ENCODE measurements at regions of chr1 and their contacts with region 1.

Region 1: GRCh38 chr1:27589841-27590426 is 14.0 kb downstream of the AHDC1 start:
- DNase-seq: no peak
- H3K4me3 ChIP-seq: no peak overlapping the region
- H3K27ac ChIP-seq: no peak overlapping the region
- H3K4me1 ChIP-seq: peaks cover 41% of the 10 kb centered on the region
- H3K27me3 ChIP-seq: no peaks in the 10 kb centered on the region
- CTCF ChIP-seq: no peak

Region 2: GRCh38 chr1:27473755-27474154 is 116.2 kb before region 1 on chr1:
- CTCF ChIA-PET with region 1: no interaction called
- dilution Hi-C with region 1: no loop called
- in situ Hi-C with region 1: no loop called
- intact Hi-C with region 1: no loop called
- DNase-seq: no peak
- H3K4me3 ChIP-seq: no peak overlapping the region
- H3K27ac ChIP-seq: no peak overlapping the region
- H3K4me1 ChIP-seq: peaks cover 7% of the 10 kb centered on the region
- H3K27me3 ChIP-seq: no peaks in the 10 kb centered on the region
- CTCF ChIP-seq: no peak

Region 3: DNA sequence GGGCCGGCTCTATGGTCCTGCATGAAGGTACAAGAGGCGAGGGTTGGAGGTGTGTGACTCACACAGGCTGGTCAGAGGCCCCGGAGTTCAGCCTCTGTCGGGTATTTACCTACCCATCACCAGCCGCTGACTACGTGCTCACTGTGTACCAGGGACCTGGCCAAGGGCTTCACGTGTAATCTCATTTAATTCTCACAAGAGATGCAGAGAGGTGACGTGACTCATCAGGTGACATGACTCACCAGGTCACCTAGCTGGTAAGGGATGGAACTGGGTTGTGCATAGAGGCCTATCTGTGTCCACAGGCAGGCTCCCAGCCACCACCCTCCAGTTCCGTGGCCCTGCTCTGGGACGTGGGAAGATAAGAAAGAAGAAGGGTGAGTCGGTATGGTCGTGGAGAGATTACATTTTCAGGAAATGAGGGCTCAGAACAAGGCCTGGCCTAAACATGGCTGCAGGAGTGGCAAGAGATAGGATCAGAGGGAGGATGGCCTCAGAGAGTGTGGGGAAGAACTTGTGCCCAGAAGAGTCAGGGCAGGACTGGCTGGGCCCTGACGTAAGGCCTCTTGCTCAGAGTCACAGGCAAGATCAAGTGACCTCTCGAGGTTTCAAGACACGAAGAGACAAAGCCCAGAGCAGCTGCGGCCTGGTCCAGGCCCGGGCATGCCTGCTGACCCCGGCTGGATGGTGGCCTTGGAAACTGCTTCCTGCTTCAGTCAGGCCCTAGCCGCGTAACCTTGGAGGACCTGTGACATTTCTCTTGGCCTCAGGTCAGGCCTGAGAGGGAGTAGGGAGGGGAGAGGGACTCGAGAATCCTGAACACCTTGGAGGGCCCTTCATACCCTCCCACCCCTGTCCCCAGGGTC is 47.3 kb before region 1 on chr1:
- CTCF ChIA-PET with region 1: no interaction called
- dilution Hi-C with region 1: loop called (anchors 5 kb)
- in situ Hi-C with region 1: no loop called
- intact Hi-C with region 1: no loop called
- DNase-seq: peak; percentile 99
- H3K4me3 ChIP-seq: no peak overlapping the region
- H3K27ac ChIP-seq: peak overlapping the region; percentile 80
- H3K4me1 ChIP-seq: peaks cover 81% of the 10 kb centered on the region
- H3K27me3 ChIP-seq: no peaks in the 10 kb centered on the region
- CTCF ChIP-seq: no peak

Region 4: GRCh38 chr1:27760426-27760825 is 170.5 kb after region 1 on chr1:
- CTCF ChIA-PET with region 1: no interaction called
- dilution Hi-C with region 1: no loop called
- in situ Hi-C with region 1: no loop called
- intact Hi-C with region 1: no loop called
- DNase-seq: no peak
- H3K4me3 ChIP-seq: no peak overlapping the region
- H3K27ac ChIP-seq: no peak overlapping the region
- H3K4me1 ChIP-seq: no peaks in the 10 kb centered on the region
- H3K27me3 ChIP-seq: no peaks in the 10 kb centered on the region
- CTCF ChIP-seq: peak in 1 of 2 donors; percentile 8

Measured in mammary epithelial cell (primary cell).